AG04449 (cell line): ENCODE measurements at regions of chr21 and their contacts with region 1.

Region 1: GRCh38 chr21:44801468-44802395 is at the start of gene UBE2G2:
- DNase-seq: no peak
- H3K4me3 ChIP-seq: peak within 1 kb of the TSS; percentile 93
- CTCF ChIP-seq: no peak

Region 2: DNA sequence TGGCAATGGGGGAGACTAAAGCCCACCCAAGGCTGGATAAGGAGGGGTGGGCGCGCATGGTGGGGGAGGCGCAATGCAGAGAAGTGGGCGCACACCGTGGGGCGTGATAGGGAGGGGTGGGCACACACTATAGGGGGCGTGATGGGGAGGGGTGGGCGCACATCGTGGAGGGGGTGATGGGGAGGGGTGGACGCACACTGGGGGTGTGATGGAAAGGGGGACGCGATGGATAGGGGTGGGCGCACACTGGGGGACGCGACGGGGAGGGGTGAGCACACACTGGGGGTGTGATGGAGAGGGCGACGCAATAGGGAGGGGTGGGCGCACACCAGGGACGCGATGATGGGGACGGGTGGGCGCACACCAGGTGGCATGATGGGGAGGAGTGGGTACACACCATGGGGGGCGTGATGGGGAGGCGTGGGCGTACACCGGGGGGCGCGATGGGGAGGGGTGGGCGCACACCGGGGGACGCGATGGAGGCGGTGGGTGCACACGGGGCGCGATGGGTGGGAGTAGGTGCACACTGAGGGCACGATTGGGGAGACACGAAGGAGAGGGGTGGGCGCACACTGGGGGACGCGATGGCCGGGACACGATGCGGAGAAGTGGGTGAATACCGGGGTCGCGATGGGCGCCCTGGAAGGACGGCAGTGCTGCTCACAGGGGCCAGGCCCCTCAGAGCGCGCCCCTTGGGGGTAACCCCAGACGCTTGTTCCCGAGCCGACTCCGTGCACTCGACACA is 15.2 kb after region 1 on chr21:
- CTCF ChIA-PET with region 1: interaction called, 13 read pairs
- POLR2A ChIA-PET with region 1: interaction called, 3 read pairs
- DNase-seq: no peak
- H3K4me3 ChIP-seq: peak overlapping the region; percentile 71
- CTCF ChIP-seq: no peak

Region 3: DNA sequence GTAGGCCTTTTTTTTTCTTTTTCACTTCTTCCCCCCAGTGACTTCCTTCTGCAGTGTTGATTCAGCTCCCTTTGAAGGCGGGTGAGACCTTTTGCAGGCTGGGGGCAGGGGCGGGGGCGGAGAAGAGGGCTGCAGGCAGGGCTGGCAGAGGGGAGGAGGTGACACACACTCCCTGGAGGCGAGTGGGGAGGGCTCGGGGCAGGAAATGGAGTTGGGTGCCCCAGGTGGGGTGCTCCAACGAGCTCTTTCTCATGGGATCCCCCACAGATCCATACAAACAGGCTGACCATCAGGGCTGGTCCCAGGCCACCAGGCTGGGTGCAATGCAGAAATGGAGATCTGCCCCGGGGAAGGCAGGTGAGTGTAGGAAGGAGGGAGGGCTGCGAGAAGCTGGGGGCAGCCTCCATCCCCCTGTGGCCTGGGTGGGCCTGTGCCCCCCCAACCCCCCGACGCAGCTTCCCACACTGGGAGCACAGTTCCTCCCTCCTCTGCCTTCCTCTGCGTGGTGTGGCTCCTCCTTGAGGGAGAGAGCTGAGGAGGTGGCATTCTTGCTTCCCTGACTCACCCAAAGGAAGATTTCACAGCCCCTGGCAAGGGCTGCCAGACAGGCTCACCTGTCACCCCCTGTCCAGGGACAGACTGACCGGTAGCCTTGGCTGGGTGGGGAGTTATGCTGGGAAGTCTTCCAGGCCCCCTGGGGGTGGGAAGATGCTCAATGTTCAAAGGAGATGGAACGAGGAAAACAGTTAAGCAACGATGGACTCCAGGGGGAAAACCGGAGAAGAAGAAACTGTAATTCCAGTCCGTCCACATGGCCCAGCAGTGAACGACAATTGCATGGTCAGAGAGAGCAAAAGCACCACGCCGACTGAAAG is 126.1 kb after region 1 on chr21:
- CTCF ChIA-PET with region 1: interaction called, 52 read pairs
- POLR2A ChIA-PET with region 1: interaction called, 12 read pairs
- DNase-seq: no peak
- H3K4me3 ChIP-seq: no peak overlapping the region; the same call in 1 of the 2 replicates
- CTCF ChIP-seq: peak; percentile 18